CD4-positive, alpha-beta T cell (primary cell): ENCODE measurements at regions of chr11 and their contacts with region 1.

Region 1: GRCh38 chr11:103875855-103876510 is 160.5 kb upstream of the DDI1 start:
- DNase-seq: no peak
- ATAC-seq: no peak
- H3K4me3 ChIP-seq: no peak overlapping the region
- H3K4me3 Mint-ChIP-seq: no peak overlapping the region
- H3K27ac ChIP-seq: no peak overlapping the region
- H3K27ac Mint-ChIP-seq: no peak overlapping the region
- H3K4me1 ChIP-seq: no peaks in the 10 kb centered on the region
- H3K4me1 Mint-ChIP-seq: no peaks in the 10 kb centered on the region
- H3K27me3 ChIP-seq: no peaks in the 10 kb centered on the region
- H3K27me3 Mint-ChIP-seq: no peaks in the 10 kb centered on the region
- CTCF ChIP-seq: no peak

Region 2: GRCh38 chr11:103844327-103845215 is 31.4 kb before region 1 on chr11:
- CTCF ChIA-PET with region 1: no interaction called
- POLR2A ChIA-PET with region 1: no interaction called
- intact Hi-C with region 1: no loop called
- DNase-seq: no peak
- ATAC-seq: no peak
- H3K4me3 ChIP-seq: no peak overlapping the region
- H3K4me3 Mint-ChIP-seq: no peak overlapping the region
- H3K27ac ChIP-seq: no peak overlapping the region
- H3K27ac Mint-ChIP-seq: no peak overlapping the region
- H3K4me1 ChIP-seq: no peaks in the 10 kb centered on the region
- H3K4me1 Mint-ChIP-seq: no peaks in the 10 kb centered on the region
- H3K27me3 ChIP-seq: no peaks in the 10 kb centered on the region
- H3K27me3 Mint-ChIP-seq: no peaks in the 10 kb centered on the region
- CTCF ChIP-seq: no peak

Region 3: DNA sequence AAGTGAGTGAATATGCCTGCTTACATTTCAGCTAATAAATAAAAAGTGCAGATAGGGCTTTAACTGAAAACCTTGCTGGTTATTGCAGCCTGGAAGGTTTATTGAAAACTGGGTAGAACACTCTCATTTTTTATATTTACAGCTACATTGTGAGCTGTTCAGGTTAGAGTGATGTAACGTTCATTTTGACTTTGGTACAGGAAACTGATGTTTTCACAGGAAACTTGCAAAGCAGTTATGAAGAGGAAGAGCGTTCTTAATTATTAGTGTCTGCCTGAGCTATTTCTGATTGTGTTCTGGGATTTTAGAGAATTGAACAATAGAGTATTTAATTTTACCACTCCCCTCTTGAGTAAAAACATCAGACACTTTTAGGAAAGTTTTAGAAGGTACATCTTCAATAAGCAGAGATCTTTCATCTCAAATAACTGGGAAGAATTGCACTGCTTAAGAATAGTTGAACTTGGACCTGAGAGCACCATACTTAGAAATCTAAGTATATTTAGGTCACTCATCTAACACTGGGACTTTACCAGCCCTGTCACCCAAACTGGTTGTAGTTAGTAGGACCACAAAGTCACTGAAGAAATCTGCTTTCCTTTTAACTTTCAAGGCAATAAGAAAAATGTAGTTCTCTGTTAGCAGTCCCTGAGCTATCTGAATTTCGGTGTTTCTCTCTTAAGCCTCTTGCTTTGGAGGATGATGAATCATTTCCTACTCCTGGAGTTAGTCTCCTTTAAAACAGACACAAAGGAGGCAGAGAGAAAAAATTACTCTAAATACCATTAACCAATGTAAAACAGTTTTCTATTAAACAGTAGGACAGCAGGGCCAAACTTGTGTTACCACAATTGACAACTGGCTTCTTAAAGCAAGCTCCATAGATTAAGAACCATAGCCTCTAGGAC is 31.8 kb after region 1 on chr11:
- CTCF ChIA-PET with region 1: no interaction called
- POLR2A ChIA-PET with region 1: no interaction called
- intact Hi-C with region 1: loop called in 1 of 2 experiments (anchors 1 kb)
- DNase-seq: no peak
- ATAC-seq: no peak
- H3K4me3 ChIP-seq: no peak overlapping the region
- H3K4me3 Mint-ChIP-seq: no peak overlapping the region
- H3K27ac ChIP-seq: no peak overlapping the region
- H3K27ac Mint-ChIP-seq: no peak overlapping the region
- H3K4me1 ChIP-seq: no peaks in the 10 kb centered on the region
- H3K4me1 Mint-ChIP-seq: no peaks in the 10 kb centered on the region
- H3K27me3 ChIP-seq: no peaks in the 10 kb centered on the region
- H3K27me3 Mint-ChIP-seq: no peaks in the 10 kb centered on the region
- CTCF ChIP-seq: no peak